SK-N-SH (cell line): ENCODE measurements at regions of chr7 and their contacts with region 1.

Region 1: GRCh38 chr7:44200647-44201461 is at the start of gene YKT6:
- DNase-seq: peak; percentile 99
- H3K4me3 ChIP-seq: peak within 1 kb of the TSS; percentile 92 to 99
- H3K27ac ChIP-seq: peak within 1 kb of the TSS; percentile 80 to 85
- H3K4me1 ChIP-seq: peaks cover 5 to 16% of the 10 kb centered on the region in 2 experiments; a peak in 2 of 4 replicates
- H3K27me3 ChIP-seq: peaks cover 6% of the 10 kb centered on the region; the same call in 1 of the 2 replicates
- CTCF ChIP-seq: peak; percentile 69
- EP300 ChIP-seq: no peak; a peak in 1 of 4 replicates
- RAD21 ChIP-seq: peak; percentile 31; the same call in 1 of the 2 replicates
- polyA plus RNA-seq, gene YKT6: 170 and 213 TPM in 2 replicates

Region 2: DNA sequence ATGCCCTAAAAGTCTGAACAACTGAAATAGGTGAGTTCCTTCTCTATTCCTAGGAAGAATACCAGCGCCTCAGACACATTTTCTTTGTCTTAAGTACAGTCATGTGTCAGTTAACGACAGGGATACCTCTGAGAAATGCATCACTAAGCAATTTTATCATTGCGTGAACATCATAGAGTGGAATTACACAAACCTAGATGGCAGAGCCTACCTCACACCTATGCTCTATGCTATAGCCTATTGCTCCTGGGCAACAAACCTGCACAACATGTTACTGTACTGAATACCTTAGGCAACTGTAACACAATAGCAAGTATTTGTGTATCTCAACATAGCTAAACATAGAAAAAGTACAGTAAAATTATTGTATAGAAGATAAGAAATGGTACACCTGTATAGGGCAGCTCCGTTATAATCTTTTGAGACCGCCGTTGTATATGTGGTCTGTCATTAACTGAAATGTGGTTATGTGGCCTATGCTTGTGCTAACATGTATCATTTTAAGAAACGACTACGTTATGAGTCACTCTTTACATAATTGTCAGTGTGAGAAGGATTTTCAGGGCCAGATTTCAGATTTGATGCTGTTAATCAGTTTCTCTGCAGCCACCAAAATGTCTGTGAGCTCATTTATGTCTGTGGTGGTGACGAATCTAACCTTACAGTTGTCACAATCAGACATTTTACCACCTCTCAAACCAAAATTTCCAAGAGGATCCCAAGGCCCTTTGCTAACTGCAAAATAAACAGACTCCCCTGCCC is 684.1 kb before region 1 on chr7:
- CTCF ChIA-PET with region 1: no interaction called
- POLR2A ChIA-PET with region 1: no interaction called
- DNase-seq: no peak
- H3K4me3 ChIP-seq: no peak overlapping the region
- H3K27ac ChIP-seq: no peak overlapping the region
- H3K4me1 ChIP-seq: peaks cover 0 to 3% of the 10 kb centered on the region in 2 experiments; a peak in 1 of 4 replicates
- H3K27me3 ChIP-seq: peaks cover 31% of the 10 kb centered on the region; the same call in 1 of the 2 replicates
- CTCF ChIP-seq: no peak
- EP300 ChIP-seq: no peak
- RAD21 ChIP-seq: no peak

Region 3: GRCh38 chr7:44065436-44066118 is 135.3 kb before region 1 on chr7 and contains the start of gene PGAM2:
- CTCF ChIA-PET with region 1: interaction called, 68 read pairs
- POLR2A ChIA-PET with region 1: interaction called, 8 read pairs
- DNase-seq: peak; percentile 72
- H3K4me3 ChIP-seq: peak within 1 kb of the TSS in 1 of 2 experiments; percentile 13; a peak in 1 of 4 replicates
- H3K27ac ChIP-seq: peak within 1 kb of the TSS in 1 of 2 experiments; percentile 18; a peak in 1 of 4 replicates
- H3K4me1 ChIP-seq: peaks cover 4 to 43% of the 10 kb centered on the region in 2 experiments
- H3K27me3 ChIP-seq: no peaks in the 10 kb centered on the region
- CTCF ChIP-seq: no peak
- EP300 ChIP-seq: no peak
- RAD21 ChIP-seq: no peak
- polyA plus RNA-seq, gene PGAM2: 0.79 and 1.5 TPM in 2 replicates

Region 4: DNA sequence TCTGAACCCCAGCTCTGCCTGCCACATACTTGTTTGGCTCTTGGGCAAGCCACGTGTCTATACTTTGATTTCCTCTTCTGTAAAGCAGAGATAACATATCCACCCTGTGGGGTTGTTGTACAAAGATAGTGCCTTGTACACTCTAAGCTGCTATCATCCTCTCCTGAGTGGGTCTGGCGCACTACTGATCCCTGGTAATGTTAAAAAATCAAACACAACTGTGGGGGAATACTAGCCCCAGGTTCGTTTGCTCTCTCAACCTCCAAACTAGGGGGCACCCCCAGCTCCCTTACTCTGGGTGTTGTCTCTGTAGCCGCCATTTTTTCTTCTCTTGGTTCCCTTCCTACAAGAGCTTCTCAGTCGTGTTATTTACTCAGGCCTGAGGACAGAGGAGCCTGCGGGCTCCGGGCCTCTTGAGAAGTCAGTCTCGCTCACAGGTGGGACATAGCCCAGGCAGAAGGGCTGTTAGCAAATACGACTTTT is 119.5 kb before region 1 on chr7:
- CTCF ChIA-PET with region 1: interaction called, 18 read pairs
- POLR2A ChIA-PET with region 1: interaction called, 5 read pairs
- DNase-seq: no peak
- H3K4me3 ChIP-seq: peak overlapping the region; percentile 83 to 84
- H3K27ac ChIP-seq: peak overlapping the region; percentile 13 to 84; a peak in 3 of 4 replicates
- H3K4me1 ChIP-seq: peaks cover 7 to 14% of the 10 kb centered on the region in 2 experiments
- H3K27me3 ChIP-seq: no peaks in the 10 kb centered on the region
- CTCF ChIP-seq: no peak
- EP300 ChIP-seq: no peak
- RAD21 ChIP-seq: no peak

Region 5: DNA sequence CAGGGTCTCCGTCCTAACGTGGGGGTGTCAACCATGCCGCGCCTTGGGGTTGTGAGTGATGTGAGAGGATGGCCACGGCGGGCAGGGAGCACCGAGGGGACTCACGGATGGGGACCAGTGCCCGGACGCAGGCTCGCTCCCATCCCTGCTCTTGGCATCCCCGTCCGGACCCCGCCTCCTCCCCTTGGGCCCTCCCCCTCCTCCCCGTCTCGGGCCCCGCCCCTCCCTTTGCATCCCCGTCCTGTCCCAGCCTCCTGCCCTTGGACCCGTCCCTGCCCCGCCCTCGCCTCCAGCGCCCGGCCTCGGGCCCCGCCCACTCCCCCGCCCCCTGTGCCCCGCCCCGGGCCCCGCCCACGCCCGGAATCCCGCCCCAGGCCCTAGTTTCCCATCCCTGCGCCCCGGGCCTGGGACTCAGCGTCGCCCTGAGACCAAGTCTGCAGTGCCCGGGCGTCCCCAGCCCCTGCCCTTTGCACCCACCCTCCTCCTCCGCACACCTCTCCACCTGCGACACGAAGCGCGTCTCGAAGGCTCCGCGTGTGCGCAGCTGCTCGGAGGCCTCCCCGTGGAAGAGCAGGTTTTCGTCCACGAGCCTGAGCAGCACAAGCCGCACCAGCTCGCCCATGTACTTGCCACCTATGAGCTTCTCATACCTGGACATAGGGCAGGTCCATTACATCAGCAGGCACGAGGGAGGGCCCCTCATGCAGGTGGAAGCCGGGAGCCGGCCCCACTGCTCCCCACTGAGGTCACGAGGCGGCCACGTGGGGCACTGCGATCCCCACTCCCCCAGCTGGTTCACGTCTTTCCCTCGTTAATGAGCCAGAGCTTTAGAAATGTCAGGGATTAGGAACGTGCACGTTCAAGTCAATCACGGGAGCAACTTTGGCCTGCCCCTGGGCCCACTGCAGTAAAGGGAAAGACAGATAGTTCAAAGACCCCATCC is 54.6 kb before region 1 on chr7:
- CTCF ChIA-PET with region 1: interaction called, 15 read pairs
- POLR2A ChIA-PET with region 1: no interaction called
- DNase-seq: peak; percentile 99
- H3K4me3 ChIP-seq: peak overlapping the region; percentile 51 to 59
- H3K27ac ChIP-seq: no peak overlapping the region
- H3K4me1 ChIP-seq: peaks cover 0 to 18% of the 10 kb centered on the region in 2 experiments; a peak in 1 of 4 replicates
- H3K27me3 ChIP-seq: no peaks in the 10 kb centered on the region
- CTCF ChIP-seq: no peak
- EP300 ChIP-seq: no peak
- RAD21 ChIP-seq: no peak

Region 6: DNA sequence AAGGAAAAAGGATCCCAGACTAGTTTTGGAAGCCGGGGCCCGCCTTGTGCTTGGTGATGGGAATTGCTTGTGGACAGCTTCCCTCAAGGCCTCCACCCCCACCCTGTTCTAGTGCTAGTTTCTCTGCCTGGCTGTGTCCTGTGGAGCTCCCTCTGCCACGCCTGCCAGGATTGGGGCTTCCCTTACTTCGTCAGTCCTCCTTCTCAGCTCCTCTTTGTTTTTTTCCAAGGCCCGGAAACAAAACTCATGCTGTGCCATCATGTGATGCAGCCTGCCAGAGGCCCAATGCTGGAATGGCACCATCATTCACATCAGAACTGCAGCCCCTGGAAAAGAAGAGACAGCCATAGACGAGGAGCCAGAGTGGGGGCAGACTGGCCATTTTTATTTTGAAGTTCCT is 11.2 kb after region 1 on chr7:
- CTCF ChIA-PET with region 1: interaction called, 32 read pairs
- POLR2A ChIA-PET with region 1: interaction called, 6 read pairs
- DNase-seq: no peak
- H3K4me3 ChIP-seq: no peak overlapping the region
- H3K27ac ChIP-seq: no peak overlapping the region
- H3K4me1 ChIP-seq: peaks cover 0 to 16% of the 10 kb centered on the region in 2 experiments; a peak in 1 of 4 replicates
- H3K27me3 ChIP-seq: no peaks in the 10 kb centered on the region
- CTCF ChIP-seq: no peak
- EP300 ChIP-seq: no peak
- RAD21 ChIP-seq: no peak

Region 7: DNA sequence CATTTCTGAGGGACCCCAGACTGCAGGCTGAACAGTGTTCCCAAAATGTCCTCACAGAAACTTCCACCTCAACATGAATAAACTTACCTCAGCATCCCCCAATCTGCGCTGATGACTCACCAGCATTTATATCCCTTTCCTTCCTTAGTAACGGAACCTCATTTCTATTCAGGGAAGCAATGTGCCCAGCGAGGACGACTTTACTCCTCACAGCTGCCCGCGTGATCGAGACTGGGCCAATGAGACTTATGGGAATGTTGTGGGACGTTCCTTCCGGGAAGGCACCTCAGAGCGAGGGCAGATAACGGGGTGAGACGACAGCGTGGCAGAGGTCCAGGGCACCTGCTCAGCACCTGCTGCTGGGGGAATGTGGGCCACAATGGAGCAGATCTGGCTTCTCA is 197.7 kb after region 1 on chr7:
- CTCF ChIA-PET with region 1: no interaction called
- POLR2A ChIA-PET with region 1: no interaction called
- DNase-seq: no peak
- H3K4me3 ChIP-seq: no peak overlapping the region
- H3K27ac ChIP-seq: no peak overlapping the region
- H3K4me1 ChIP-seq: peaks cover 0 to 27% of the 10 kb centered on the region in 2 experiments; a peak in 1 of 4 replicates
- H3K27me3 ChIP-seq: no peaks in the 10 kb centered on the region
- CTCF ChIP-seq: no peak
- EP300 ChIP-seq: no peak
- RAD21 ChIP-seq: no peak

Region 8: GRCh38 chr7:44565097-44565794 is 364.4 kb after region 1 on chr7:
- CTCF ChIA-PET with region 1: interaction called, 13 read pairs
- POLR2A ChIA-PET with region 1: interaction called, 3 read pairs
- DNase-seq: peak; percentile 80
- H3K4me3 ChIP-seq: no peak overlapping the region; a peak in 1 of 4 replicates
- H3K27ac ChIP-seq: no peak overlapping the region
- H3K4me1 ChIP-seq: peaks cover 4 to 5% of the 10 kb centered on the region in 2 experiments; a peak in 2 of 4 replicates
- H3K27me3 ChIP-seq: no peaks in the 10 kb centered on the region
- CTCF ChIP-seq: peak; percentile 99
- EP300 ChIP-seq: no peak
- RAD21 ChIP-seq: peak; percentile 78